BJ (cell line): ENCODE measurements at regions of chr15 and their contacts with region 1.

Region 1: GRCh38 chr15:81342561-81342960 is 18.6 kb upstream of the STARD5 start:
- DNase-seq: no peak
- H3K4me3 ChIP-seq: no peak overlapping the region
- H3K27me3 ChIP-seq: no peaks in the 10 kb centered on the region
- CTCF ChIP-seq: no peak

Region 2: GRCh38 chr15:81357223-81357622 is 14.7 kb after region 1 on chr15:
- CTCF ChIA-PET with region 1: interaction called, 20 read pairs
- POLR2A ChIA-PET with region 1: no interaction called
- DNase-seq: no peak
- H3K4me3 ChIP-seq: no peak overlapping the region
- H3K27me3 ChIP-seq: peaks cover 1% of the 10 kb centered on the region; the same call in 1 of the 2 replicates
- CTCF ChIP-seq: no peak